ENCODE measurements at regions of chr14 and their contacts with region 1.

Region 1: GRCh38 chr14:96297000-96297399 is 41.0 kb downstream of the BDKRB1 start:
- DNase-seq: no peak
- ATAC-seq: peak; percentile 66; the same call in 2 of the 3 replicates
- H3K4me3 ChIP-seq: no peak overlapping the region
- H3K27ac ChIP-seq: no peak overlapping the region
- H3K4me1 ChIP-seq: no peaks in the 10 kb centered on the region
- H3K27me3 ChIP-seq: no peaks in the 10 kb centered on the region
- CTCF ChIP-seq: peak; percentile 19 to 50 (median 39); a peak in 4 of 6 replicates
- EP300 ChIP-seq: no peak
- POLR2A ChIP-seq: no peak
- RAD21 ChIP-seq: peak; percentile 62

Region 2: DNA sequence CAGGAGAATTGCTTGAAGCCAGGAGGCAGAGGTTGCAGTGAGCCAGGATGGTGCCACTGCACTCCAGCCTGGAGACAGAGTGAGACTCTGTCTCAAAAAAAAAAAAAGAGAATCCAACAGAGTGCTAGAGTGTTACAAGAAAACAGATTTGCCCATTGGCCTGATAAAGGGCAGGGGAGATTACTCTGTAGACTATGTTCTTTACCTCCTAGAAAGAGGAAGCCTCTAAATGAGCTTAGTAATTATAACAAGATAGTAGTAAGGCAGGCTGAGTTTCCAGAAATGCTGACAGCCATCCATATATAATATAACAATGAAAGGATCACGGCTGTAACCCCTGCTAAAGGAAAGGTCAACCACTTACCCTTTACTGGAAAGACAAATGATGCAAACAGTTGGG is 119.3 kb after region 1 on chr14:
- CTCF ChIA-PET with region 1: interaction called, 51 read pairs
- POLR2A ChIA-PET with region 1: no interaction called
- RAD21 ChIA-PET with region 1: no interaction called
- SMC1A ChIA-PET with region 1: interaction called, 3 read pairs
- in situ Hi-C with region 1: loop called (anchors 5 kb)
- intact Hi-C with region 1: no loop called
- DNase-seq: no peak
- ATAC-seq: no peak
- H3K4me3 ChIP-seq: no peak overlapping the region
- H3K27ac ChIP-seq: no peak overlapping the region
- H3K4me1 ChIP-seq: no peaks in the 10 kb centered on the region
- H3K27me3 ChIP-seq: no peaks in the 10 kb centered on the region
- CTCF ChIP-seq: no peak
- EP300 ChIP-seq: no peak
- POLR2A ChIP-seq: no peak
- RAD21 ChIP-seq: no peak

Region 3: GRCh38 chr14:96424109-96424989 is 127.3 kb after region 1 on chr14:
- CTCF ChIA-PET with region 1: interaction called, 51 read pairs
- POLR2A ChIA-PET with region 1: no interaction called
- RAD21 ChIA-PET with region 1: interaction called, 3 read pairs
- SMC1A ChIA-PET with region 1: interaction called, 9 read pairs
- in situ Hi-C with region 1: loop called (anchors 5 kb)
- intact Hi-C with region 1: loop called (anchors 1 kb)
- DNase-seq: peak; percentile 45
- ATAC-seq: peak; percentile 93
- H3K4me3 ChIP-seq: peak overlapping the region; percentile 64
- H3K27ac ChIP-seq: no peak overlapping the region
- H3K4me1 ChIP-seq: no peaks in the 10 kb centered on the region
- H3K27me3 ChIP-seq: no peaks in the 10 kb centered on the region
- CTCF ChIP-seq: peak; percentile 53 to 86 (median 66); a peak in 5 of 6 replicates
- EP300 ChIP-seq: no peak
- POLR2A ChIP-seq: no peak
- RAD21 ChIP-seq: peak; percentile 91

Measured in GM12878 (cell line).